ENCODE measurements at regions of chr3 and their contacts with region 1.

Region 1: DNA sequence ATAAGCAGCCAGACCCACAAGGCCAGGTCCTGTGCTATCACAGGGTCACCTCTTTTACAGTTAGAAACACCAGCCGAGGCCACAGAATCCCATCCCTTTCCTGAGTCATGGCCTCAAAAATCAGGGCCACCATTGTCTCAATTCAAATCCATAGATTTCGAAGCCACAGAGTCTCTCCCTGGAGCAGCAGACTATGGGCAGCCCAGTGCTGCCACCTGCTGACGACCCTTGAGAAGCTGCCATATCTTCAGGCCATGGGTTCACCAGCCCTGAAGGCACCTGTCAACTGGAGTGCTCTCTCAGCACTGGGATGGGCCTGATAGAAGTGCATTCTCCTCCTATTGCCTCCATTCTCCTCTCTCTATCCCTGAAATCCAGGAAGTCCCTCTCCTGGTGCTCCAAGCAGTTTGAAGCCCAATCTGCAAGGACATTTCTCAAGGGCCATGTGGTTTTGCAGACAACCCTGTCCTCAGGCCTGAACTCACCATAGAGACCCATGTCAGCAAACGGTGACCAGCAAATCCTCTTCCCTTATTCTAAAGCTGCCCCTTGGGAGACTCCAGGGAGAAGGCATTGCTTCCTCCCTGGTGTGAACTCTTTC is 39.6 kb downstream of the TGM4 start:
- DNase-seq: peak; percentile 46 to 80 (median 58)
- ATAC-seq: peak; percentile 64
- H3K4me3 ChIP-seq: no peak overlapping the region
- H3K4me3 Mint-ChIP-seq: no peak overlapping the region
- H3K27ac ChIP-seq: no peak overlapping the region
- H3K27ac Mint-ChIP-seq: no peak overlapping the region
- H3K4me1 ChIP-seq: no peaks in the 10 kb centered on the region
- H3K4me1 Mint-ChIP-seq: no peaks in the 10 kb centered on the region
- H3K27me3 ChIP-seq: peaks cover 8 to 11% of the 10 kb centered on the region in 2 experiments
- H3K27me3 Mint-ChIP-seq: peaks cover 23% of the 10 kb centered on the region
- CTCF ChIP-seq: peak; percentile 76

Region 2: DNA sequence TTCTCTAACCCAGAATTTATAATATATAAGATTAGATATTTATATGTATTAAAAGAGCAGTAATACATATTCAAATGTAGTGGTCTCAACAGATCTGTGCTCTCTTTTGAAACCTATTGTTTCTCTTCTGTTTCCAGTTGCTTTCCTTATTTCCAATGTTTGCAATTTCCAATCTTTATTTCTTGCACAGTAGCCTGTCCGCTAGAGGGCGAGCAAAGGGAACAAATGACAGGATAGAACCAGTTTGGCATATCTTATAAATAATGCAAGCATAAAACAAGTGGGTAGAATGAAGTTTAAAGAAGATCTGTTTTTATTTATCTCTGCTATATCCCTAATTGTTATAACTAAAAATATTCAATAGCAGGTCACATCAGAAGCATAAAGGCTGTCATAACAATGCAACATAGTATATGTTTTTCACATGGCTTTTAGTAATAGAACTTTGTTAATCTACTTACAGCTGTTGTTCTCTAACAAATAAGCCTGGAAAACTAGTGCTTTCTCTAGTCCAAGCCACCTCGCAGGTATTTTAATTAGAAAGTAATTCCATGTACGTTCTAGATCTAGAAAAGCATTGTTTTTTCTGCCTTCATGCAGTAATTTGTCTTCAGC is 590.5 kb before region 1 on chr3:
- CTCF ChIA-PET with region 1: no interaction called
- POLR2A ChIA-PET with region 1: no interaction called
- intact Hi-C with region 1: loop called (anchors 1 to 2 kb)
- DNase-seq: peak; percentile 20 to 72 (median 48)
- ATAC-seq: no peak
- H3K4me3 ChIP-seq: no peak overlapping the region
- H3K4me3 Mint-ChIP-seq: no peak overlapping the region
- H3K27ac ChIP-seq: no peak overlapping the region
- H3K27ac Mint-ChIP-seq: no peak overlapping the region
- H3K4me1 ChIP-seq: peaks cover 3% of the 10 kb centered on the region
- H3K4me1 Mint-ChIP-seq: no peaks in the 10 kb centered on the region
- H3K27me3 ChIP-seq: no peaks in the 10 kb centered on the region
- H3K27me3 Mint-ChIP-seq: peaks cover 10% of the 10 kb centered on the region
- CTCF ChIP-seq: peak; percentile 90

Region 3: DNA sequence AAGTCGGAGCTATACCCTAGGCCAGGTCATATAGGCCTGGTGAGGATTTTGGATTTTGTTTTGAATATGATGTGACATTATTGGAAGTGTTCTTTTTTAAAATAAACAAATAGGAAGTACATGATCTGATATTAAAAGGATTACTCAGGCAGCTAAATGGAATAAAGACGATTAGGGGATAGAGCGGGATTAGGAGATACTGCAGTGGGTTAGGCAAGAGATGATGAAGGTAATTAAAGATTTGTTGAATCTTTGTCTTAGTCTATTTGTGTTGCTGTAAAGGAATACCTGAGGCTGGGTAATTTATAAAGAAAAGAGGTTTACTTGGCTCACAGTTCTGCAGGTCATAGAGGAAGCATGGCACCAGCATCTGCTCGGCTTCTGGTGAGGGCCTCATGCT is 131.1 kb before region 1 on chr3:
- CTCF ChIA-PET with region 1: no interaction called
- POLR2A ChIA-PET with region 1: no interaction called
- intact Hi-C with region 1: no loop called
- DNase-seq: no peak
- ATAC-seq: no peak
- H3K4me3 ChIP-seq: no peak overlapping the region
- H3K4me3 Mint-ChIP-seq: no peak overlapping the region
- H3K27ac ChIP-seq: no peak overlapping the region
- H3K27ac Mint-ChIP-seq: no peak overlapping the region
- H3K4me1 ChIP-seq: no peaks in the 10 kb centered on the region
- H3K4me1 Mint-ChIP-seq: no peaks in the 10 kb centered on the region
- H3K27me3 ChIP-seq: no peaks in the 10 kb centered on the region
- H3K27me3 Mint-ChIP-seq: no peaks in the 10 kb centered on the region
- CTCF ChIP-seq: no peak

Region 4: DNA sequence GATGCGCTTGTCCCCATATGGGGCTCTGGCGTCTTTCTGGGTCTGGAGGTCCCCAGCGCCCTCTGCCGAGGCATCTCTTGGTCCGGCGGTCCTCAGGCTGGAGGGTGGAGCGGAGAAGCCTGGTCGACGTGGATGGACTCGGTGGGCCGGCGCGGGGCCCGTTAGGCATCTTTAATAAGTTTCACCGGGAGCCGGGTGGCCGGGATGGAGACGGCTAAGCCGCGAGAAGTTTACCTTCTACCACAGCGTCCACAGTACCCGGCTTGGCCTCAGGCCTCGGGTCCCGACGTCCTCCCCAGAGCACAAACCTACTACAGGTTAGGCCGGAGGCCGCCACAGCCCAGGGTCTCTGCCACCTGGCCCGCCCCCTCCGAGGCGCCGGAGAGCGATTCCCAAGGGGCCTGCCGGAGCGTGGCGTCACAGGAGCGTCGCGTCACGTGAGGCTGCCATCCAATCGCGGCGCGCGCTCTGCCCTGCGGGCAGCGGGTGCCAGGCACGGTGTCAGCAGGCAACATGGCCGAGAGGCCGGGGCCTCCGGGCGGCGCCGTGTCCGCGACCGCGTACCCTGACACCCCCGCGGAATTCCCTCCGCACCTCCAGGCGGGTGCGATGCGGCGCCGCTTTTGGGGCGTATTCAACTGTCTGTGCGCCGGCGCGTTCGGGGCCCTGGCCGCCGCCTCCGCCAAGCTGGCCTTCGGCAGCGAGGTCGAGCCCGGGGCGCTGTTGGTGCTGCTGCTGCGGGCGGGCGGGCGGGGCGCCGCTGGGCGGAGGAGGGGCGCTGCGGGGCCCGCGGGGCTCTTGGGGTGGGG is 52.4 kb before region 1 on chr3 and contains the start of gene TMEM42:
- CTCF ChIA-PET with region 1: no interaction called
- POLR2A ChIA-PET with region 1: no interaction called
- intact Hi-C with region 1: no loop called
- DNase-seq: peak; percentile 72 to 95 (median 82)
- ATAC-seq: peak; percentile 91
- H3K4me3 ChIP-seq: peak within 1 kb of the TSS; percentile 76
- H3K4me3 Mint-ChIP-seq: peak within 1 kb of the TSS; percentile 91
- H3K27ac ChIP-seq: peak within 1 kb of the TSS; percentile 72 to 80
- H3K27ac Mint-ChIP-seq: peak within 1 kb of the TSS; percentile 88
- H3K4me1 ChIP-seq: peaks cover 42% of the 10 kb centered on the region
- H3K4me1 Mint-ChIP-seq: peaks cover 48% of the 10 kb centered on the region
- H3K27me3 ChIP-seq: no peaks in the 10 kb centered on the region
- H3K27me3 Mint-ChIP-seq: no peaks in the 10 kb centered on the region
- CTCF ChIP-seq: no peak
- total RNA-seq, gene TMEM42: 6.8 to 8.0 TPM

Region 5: DNA sequence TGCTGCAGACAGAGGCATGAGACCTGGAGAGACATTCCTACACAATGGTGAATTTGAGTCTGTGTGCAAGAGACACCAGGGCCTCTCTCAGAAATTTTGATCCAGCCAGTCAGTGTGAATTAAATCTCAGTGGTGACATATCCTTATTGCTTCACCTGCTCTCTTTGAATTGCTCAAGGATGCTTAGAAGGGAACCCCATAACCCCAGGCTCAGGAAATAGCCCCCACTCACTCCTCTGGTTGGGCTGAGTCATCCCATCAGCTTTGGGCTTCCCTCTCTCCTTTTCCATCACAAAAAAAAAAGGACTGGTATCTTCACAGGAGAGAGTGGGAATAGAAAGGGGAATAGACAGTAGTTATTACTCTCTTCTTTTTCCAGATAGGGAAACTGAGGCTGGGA is 441.4 kb after region 1 on chr3:
- CTCF ChIA-PET with region 1: no interaction called
- POLR2A ChIA-PET with region 1: no interaction called
- intact Hi-C with region 1: no loop called
- DNase-seq: no peak
- ATAC-seq: no peak
- H3K4me3 ChIP-seq: no peak overlapping the region
- H3K4me3 Mint-ChIP-seq: no peak overlapping the region
- H3K27ac ChIP-seq: no peak overlapping the region
- H3K27ac Mint-ChIP-seq: no peak overlapping the region
- H3K4me1 ChIP-seq: no peaks in the 10 kb centered on the region
- H3K4me1 Mint-ChIP-seq: no peaks in the 10 kb centered on the region
- H3K27me3 ChIP-seq: peaks cover 0 to 6% of the 10 kb centered on the region in 2 experiments
- H3K27me3 Mint-ChIP-seq: no peaks in the 10 kb centered on the region
- CTCF ChIP-seq: no peak

Region 6: GRCh38 chr3:46135475-46135874 is 1221.5 kb after region 1 on chr3:
- CTCF ChIA-PET with region 1: no interaction called
- POLR2A ChIA-PET with region 1: no interaction called
- intact Hi-C with region 1: no loop called
- DNase-seq: peak in 2 of 14 experiments; percentile 28 to 43
- ATAC-seq: no peak
- H3K4me3 ChIP-seq: no peak overlapping the region
- H3K4me3 Mint-ChIP-seq: no peak overlapping the region
- H3K27ac ChIP-seq: no peak overlapping the region
- H3K27ac Mint-ChIP-seq: no peak overlapping the region
- H3K4me1 ChIP-seq: peaks cover 3% of the 10 kb centered on the region
- H3K4me1 Mint-ChIP-seq: no peaks in the 10 kb centered on the region
- H3K27me3 ChIP-seq: no peaks in the 10 kb centered on the region
- H3K27me3 Mint-ChIP-seq: no peaks in the 10 kb centered on the region
- CTCF ChIP-seq: no peak